ENCODE measurements at regions of chr1 and their contacts with region 1.

Region 1: GRCh38 chr1:197955486-197956394 is 38.6 kb downstream of the LHX9 start:
- DNase-seq: peak; percentile 65
- ATAC-seq: peak; percentile 80
- H3K4me3 ChIP-seq: no peak overlapping the region
- H3K27ac ChIP-seq: no peak overlapping the region
- H3K4me1 ChIP-seq: 0 out of 2 replicates have a peak, but pooled peaks cover 2% of the 10 kb centered on the region
- H3K27me3 ChIP-seq: no peaks in the 10 kb centered on the region
- CTCF ChIP-seq: no peak
- POLR2A ChIP-seq: no peak
- RAD21 ChIP-seq: no peak

Region 2: GRCh38 chr1:198018529-198018928 is 62.8 kb after region 1 on chr1:
- CTCF ChIA-PET with region 1: no interaction called
- POLR2A ChIA-PET with region 1: no interaction called
- dilution Hi-C with region 1: no loop called
- in situ Hi-C with region 1: no loop called
- intact Hi-C with region 1: loop called (anchors 10 kb)
- DNase-seq: peak; percentile 93
- ATAC-seq: peak; percentile 73
- H3K4me3 ChIP-seq: no peak overlapping the region
- H3K27ac ChIP-seq: no peak overlapping the region
- H3K4me1 ChIP-seq: peaks cover 2% of the 10 kb centered on the region; the same call in 1 of the 2 replicates
- H3K27me3 ChIP-seq: no peaks in the 10 kb centered on the region
- CTCF ChIP-seq: no peak
- POLR2A ChIP-seq: no peak
- RAD21 ChIP-seq: no peak

Region 3: DNA sequence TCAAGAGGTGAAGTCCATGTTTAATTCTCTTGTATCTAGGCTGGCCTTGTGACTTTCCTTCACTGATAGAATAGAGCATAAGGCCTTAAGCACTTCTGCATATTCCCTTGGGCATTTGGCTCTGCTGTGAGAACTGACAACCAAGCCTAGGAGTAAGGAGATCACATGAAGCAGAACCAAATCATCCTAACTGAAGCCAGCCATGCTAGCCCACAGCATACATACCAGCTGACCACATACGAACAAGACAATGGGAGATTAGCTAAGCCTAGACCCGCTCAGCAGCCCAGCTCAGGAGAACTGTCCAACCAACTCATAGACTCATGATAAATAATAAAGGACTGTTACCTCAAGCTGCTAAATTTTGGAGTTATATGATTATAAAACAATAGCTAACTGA is 86.4 kb after region 1 on chr1:
- CTCF ChIA-PET with region 1: no interaction called
- POLR2A ChIA-PET with region 1: no interaction called
- dilution Hi-C with region 1: no loop called
- in situ Hi-C with region 1: no loop called
- intact Hi-C with region 1: no loop called
- DNase-seq: no peak
- ATAC-seq: no peak
- H3K4me3 ChIP-seq: no peak overlapping the region
- H3K27ac ChIP-seq: no peak overlapping the region
- H3K4me1 ChIP-seq: no peaks in the 10 kb centered on the region
- H3K27me3 ChIP-seq: no peaks in the 10 kb centered on the region
- CTCF ChIP-seq: no peak
- POLR2A ChIP-seq: no peak
- RAD21 ChIP-seq: no peak

Region 4: DNA sequence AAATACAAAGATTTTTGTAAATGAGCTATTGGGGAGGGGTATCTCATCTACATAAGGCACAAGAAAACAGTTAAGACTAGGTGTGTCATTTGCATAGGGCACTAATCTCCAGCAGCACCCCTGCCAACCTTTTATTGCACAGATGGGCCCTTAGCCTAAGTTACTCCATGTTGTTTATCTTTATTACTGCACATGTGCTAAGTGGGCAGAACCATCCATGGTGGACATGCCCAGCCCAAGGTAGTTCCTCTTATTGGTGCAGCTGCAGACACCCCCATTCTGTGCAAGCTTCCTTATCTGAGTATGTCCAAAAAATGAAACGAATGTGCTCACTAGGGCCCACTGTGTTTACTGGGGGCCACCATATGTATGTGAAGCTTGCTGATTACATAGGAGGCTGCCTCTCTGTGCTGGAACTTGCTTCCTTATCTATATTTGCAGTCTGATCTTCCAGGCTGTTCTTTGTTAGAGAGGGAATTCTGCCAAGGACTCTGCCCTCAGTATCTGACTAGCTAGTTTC is 123.8 kb after region 1 on chr1:
- CTCF ChIA-PET with region 1: no interaction called
- POLR2A ChIA-PET with region 1: no interaction called
- dilution Hi-C with region 1: no loop called
- in situ Hi-C with region 1: no loop called
- intact Hi-C with region 1: no loop called
- DNase-seq: no peak
- ATAC-seq: no peak
- H3K4me3 ChIP-seq: no peak overlapping the region
- H3K27ac ChIP-seq: no peak overlapping the region
- H3K4me1 ChIP-seq: no peaks in the 10 kb centered on the region
- H3K27me3 ChIP-seq: no peaks in the 10 kb centered on the region
- CTCF ChIP-seq: no peak
- POLR2A ChIP-seq: no peak
- RAD21 ChIP-seq: no peak

Region 5: GRCh38 chr1:198416296-198416695 is 460.6 kb after region 1 on chr1:
- CTCF ChIA-PET with region 1: no interaction called
- POLR2A ChIA-PET with region 1: no interaction called
- dilution Hi-C with region 1: no loop called
- in situ Hi-C with region 1: no loop called
- intact Hi-C with region 1: no loop called
- DNase-seq: peak; percentile 59
- ATAC-seq: peak; percentile 95
- H3K4me3 ChIP-seq: no peak overlapping the region
- H3K27ac ChIP-seq: no peak overlapping the region
- H3K4me1 ChIP-seq: no peaks in the 10 kb centered on the region
- H3K27me3 ChIP-seq: no peaks in the 10 kb centered on the region
- CTCF ChIP-seq: no peak
- POLR2A ChIP-seq: no peak
- RAD21 ChIP-seq: no peak

Measured in IMR-90 (cell line).